Sigmoid colon (tissue), 7 donors: ENCODE measurements at regions of chr12 and their contacts with region 1.

Region 1: GRCh38 chr12:121579981-121580868 is 598 bp downstream of the KDM2B start:
- DNase-seq: peak; percentile 88
- H3K4me3 ChIP-seq: peak overlapping the region; percentile 50 to 76 (median 72)
- H3K27ac ChIP-seq: peak overlapping the region; percentile 85 to 91 (median 86)
- H3K4me1 ChIP-seq: peaks cover 0 to 55% (median 41%) of the 10 kb centered on the region in 4 donors
- H3K27me3 ChIP-seq: no peaks in the 10 kb centered on the region
- CTCF ChIP-seq: no peak
- EP300 ChIP-seq: no peak
- POLR2A ChIP-seq: no peak

Region 2: DNA sequence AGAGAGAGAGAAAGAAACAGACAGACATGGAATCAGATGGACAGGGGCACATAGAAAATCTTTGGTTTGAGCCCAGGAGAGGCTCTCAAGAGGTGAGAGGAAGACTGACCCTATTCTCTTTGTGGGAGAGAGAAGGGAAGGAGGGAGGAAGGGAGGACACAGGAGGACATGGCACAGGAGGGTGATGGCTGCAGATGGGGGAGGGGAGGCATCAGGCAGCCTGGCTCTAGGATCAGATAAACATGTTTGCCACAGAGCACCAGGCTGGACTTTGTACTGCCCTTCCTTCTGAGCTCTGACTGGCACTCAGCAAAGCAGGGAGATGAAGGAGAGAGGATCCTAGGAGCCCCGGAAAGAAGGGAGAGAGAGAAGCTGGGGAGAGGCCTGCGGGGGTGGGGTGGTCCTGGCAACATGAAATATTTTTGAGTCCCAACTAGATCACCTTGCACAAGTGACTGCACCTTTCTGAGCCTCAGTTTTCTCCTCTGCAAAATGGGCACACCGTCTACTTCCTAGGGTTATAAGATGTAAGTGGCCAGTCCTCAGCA is 595.8 kb before region 1 on chr12:
- intact Hi-C with region 1: no loop called
- DNase-seq: no peak
- H3K4me3 ChIP-seq: no peak overlapping the region
- H3K27ac ChIP-seq: no peak overlapping the region
- H3K4me1 ChIP-seq: no peaks in the 10 kb centered on the region
- H3K27me3 ChIP-seq: no peaks in the 10 kb centered on the region
- CTCF ChIP-seq: no peak
- EP300 ChIP-seq: no peak
- POLR2A ChIP-seq: no peak

Region 3: DNA sequence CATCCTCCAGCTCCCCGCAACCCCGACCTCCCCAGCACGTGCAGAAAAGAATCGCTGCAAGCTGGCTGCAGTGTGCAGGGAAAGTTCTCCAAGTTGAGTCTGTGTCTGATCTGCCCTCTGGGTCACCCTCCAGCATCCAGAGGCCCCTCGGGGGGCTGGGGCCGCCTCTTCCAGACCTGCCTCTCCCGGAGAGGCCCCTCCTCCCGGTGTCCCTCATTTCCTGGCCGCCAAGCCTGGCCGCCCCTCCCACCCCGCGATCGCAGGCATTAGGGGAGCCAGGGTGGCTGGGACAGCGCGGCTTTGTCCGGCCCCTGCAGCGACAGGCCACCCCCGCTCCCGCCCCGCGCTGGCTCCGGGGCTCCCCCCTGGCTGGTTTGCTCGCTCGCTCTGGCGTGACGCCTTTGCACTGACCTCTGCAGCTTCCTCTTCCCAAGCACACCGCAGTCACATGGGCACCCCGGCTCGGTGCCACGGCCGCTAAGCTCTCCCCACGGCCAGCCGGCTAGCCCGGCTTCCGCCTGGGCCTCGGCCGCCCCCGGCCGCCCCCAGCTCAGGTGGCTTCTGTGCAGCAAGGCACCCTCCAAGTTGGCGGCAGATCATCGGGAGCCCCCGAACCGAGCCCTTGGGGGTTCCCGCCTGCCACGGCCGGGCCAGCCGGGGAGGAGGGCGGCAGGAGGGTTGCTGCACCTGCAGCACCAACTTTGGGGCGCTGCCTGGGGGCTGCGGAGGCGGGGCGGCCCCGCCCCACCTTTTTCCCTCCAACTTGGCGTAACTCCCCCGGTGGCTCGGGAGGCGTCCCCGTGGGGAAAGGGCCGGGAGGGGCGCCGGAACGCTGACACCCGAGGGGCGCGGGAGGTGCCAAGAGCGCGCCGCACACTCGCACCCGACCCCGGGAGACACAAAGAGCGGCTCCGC is 43.1 kb before region 1 on chr12:
- intact Hi-C with region 1: loop called (anchors 5 kb)
- DNase-seq: peak; percentile 95
- H3K4me3 ChIP-seq: peak overlapping the region; percentile 57 to 82 (median 72)
- H3K27ac ChIP-seq: peak overlapping the region; percentile 87 to 96 (median 94)
- H3K4me1 ChIP-seq: peaks cover 0 to 39% (median 33%) of the 10 kb centered on the region in 4 donors
- H3K27me3 ChIP-seq: no peaks in the 10 kb centered on the region
- CTCF ChIP-seq: no peak
- EP300 ChIP-seq: no peak
- POLR2A ChIP-seq: peak; percentile 41 to 49

Region 4: DNA sequence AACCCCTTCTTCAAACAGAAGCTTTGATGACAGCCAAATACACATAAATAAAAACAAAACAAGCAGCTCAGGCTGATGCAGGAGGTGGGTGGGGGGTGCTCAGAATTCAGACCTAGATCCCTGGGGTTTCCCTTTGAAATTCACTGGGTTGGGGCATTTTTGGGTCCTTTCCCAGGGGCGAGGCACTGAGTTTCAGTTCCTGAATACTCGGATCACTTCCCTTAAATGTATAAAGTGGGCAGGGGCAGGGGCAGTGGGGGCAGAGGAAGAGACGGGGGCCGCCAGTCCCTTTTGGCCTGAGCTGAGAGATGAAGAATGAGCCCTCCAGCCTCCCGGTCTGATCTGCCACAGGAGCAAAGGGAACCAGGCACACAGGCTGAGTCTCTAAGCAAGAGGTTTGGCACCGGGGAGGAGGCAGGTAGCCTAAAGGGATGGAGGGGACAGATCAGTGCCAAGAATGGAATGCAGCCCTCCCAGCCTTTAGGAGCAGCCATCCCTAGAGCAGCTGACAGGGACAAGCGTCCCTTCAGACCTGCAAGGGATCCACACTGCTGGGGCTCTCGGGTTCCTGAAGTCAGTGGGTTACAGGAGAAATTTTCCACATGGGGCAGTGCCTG is 19.7 kb before region 1 on chr12:
- intact Hi-C with region 1: loop called (anchors 2 kb)
- DNase-seq: no peak
- H3K4me3 ChIP-seq: no peak overlapping the region
- H3K27ac ChIP-seq: no peak overlapping the region
- H3K4me1 ChIP-seq: no peaks in the 10 kb centered on the region
- H3K27me3 ChIP-seq: no peaks in the 10 kb centered on the region
- CTCF ChIP-seq: no peak
- EP300 ChIP-seq: no peak
- POLR2A ChIP-seq: no peak

Region 5: DNA sequence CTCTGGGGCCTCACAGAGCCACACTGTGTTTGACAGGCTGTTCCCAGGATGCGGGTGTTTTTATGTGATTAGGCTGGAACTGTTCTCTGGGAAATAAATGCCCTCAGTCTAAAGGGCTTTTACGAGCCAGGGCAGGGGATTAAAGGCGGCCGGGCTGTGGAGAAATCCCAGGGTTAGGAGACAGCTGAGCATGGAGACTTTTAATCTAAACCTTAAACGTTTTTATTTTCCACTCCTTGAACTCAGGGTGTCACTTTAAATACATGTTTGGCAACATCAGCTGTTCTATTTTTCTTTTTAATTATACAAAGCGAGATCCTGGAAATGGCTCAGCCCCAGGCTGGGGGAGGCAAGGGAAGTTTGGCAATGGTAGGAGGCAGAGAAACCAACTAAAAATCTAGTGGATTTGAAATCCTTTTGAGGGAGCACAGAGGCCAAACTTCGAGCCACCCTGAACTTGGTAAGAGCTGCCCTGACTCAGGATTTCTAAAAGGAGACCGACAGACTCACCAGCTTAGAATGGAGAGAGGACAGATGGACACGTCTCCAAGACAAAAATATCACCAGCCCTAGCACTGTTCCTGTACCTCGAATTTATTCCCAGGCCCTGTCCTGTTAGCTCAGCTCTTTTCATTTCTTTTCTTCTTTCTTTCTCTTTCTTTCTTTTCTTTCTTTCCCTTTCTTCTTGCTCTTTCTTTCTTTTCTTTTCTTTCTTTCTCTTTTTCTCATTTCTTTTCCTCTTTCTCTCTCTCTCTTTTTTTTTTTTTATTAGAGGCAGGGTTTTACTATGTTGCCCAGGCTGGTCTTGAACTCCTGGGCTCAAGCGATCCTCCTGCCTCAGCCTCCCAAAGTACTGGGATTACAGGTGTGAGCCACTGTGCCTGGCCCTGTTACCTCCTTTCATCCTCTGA is 30.3 kb after region 1 on chr12:
- intact Hi-C with region 1: loop called (anchors 5 kb)
- DNase-seq: peak; percentile 89
- H3K4me3 ChIP-seq: peak overlapping the region in 3 of 4 donors; percentile 12 to 19 (median 17)
- H3K27ac ChIP-seq: peak overlapping the region; percentile 78 to 86 (median 81)
- H3K4me1 ChIP-seq: peaks cover 0 to 27% (median 16%) of the 10 kb centered on the region in 4 donors
- H3K27me3 ChIP-seq: no peaks in the 10 kb centered on the region
- CTCF ChIP-seq: no peak
- EP300 ChIP-seq: peak in 1 of 4 donors; percentile 64
- POLR2A ChIP-seq: no peak